PC-3 (cell line): ENCODE measurements at regions of chr17 and their contacts with region 1.

Region 1: GRCh38 chr17:37373530-37374159 is 2.1 kb upstream of the C17orf78 start:
- DNase-seq: peak; percentile 83
- ATAC-seq: peak; percentile 86
- H3K4me3 ChIP-seq: no peak overlapping the region
- H3K27ac ChIP-seq: no peak overlapping the region
- H3K4me1 ChIP-seq: no peaks in the 10 kb centered on the region
- H3K27me3 ChIP-seq: no peaks in the 10 kb centered on the region
- CTCF ChIP-seq: peak; percentile 97

Region 2: GRCh38 chr17:37310940-37311339 is 62.7 kb before region 1 on chr17:
- CTCF ChIA-PET with region 1: no interaction called
- POLR2A ChIA-PET with region 1: no interaction called
- intact Hi-C with region 1: no loop called
- DNase-seq: no peak
- ATAC-seq: no peak
- H3K4me3 ChIP-seq: no peak overlapping the region
- H3K27ac ChIP-seq: no peak overlapping the region
- H3K4me1 ChIP-seq: no peaks in the 10 kb centered on the region
- H3K27me3 ChIP-seq: no peaks in the 10 kb centered on the region
- CTCF ChIP-seq: no peak

Region 3: GRCh38 chr17:37392024-37392590 is 18.5 kb after region 1 on chr17:
- CTCF ChIA-PET with region 1: interaction called, 13 read pairs
- POLR2A ChIA-PET with region 1: no interaction called
- intact Hi-C with region 1: loop called (anchors 1 kb)
- DNase-seq: peak; percentile 2
- ATAC-seq: no peak
- H3K4me3 ChIP-seq: no peak overlapping the region
- H3K27ac ChIP-seq: no peak overlapping the region
- H3K4me1 ChIP-seq: no peaks in the 10 kb centered on the region
- H3K27me3 ChIP-seq: no peaks in the 10 kb centered on the region
- CTCF ChIP-seq: no peak

Region 4: GRCh38 chr17:37430051-37430627 is 56.5 kb after region 1 on chr17:
- CTCF ChIA-PET with region 1: interaction called, 12 read pairs
- POLR2A ChIA-PET with region 1: no interaction called
- intact Hi-C with region 1: no loop called
- DNase-seq: no peak
- ATAC-seq: no peak
- H3K4me3 ChIP-seq: no peak overlapping the region
- H3K27ac ChIP-seq: no peak overlapping the region
- H3K4me1 ChIP-seq: no peaks in the 10 kb centered on the region
- H3K27me3 ChIP-seq: no peaks in the 10 kb centered on the region
- CTCF ChIP-seq: no peak